B cell (primary cell): ENCODE measurements at regions of chr17 and their contacts with region 1.

Region 1: DNA sequence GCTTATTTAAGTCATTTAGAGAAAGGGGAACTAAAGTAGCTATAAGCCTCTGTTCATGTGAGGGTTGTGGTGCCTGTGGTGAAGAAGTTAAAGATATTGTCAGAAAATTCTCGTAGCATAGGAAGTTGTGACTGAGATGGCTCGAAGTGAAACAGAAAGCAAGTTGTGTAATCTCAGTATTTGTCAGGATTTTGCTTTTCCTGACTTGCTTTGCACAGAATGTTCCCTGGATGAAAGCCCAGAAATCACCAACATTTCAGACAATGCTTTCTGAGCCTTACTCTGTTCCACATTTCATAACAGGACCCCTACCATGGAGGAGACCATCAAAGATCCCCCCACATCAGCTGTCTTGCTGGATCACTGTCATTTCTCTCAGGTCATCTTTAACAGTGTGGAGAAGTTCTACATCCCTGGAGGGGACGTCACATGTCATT is 10.6 kb downstream of the CALCOCO2 start:
- DNase-seq: peak; percentile 83
- ATAC-seq: peak; percentile 91
- H3K4me3 ChIP-seq: peak overlapping the region; percentile 23 to 56 (median 46)
- H3K4me3 Mint-ChIP-seq: peak overlapping the region; percentile 90
- H3K27ac ChIP-seq: peak overlapping the region; percentile 76 to 91
- H3K27ac Mint-ChIP-seq: peak overlapping the region; percentile 96
- H3K4me1 ChIP-seq: peaks cover 47 to 48% of the 10 kb centered on the region in 2 donors
- H3K4me1 Mint-ChIP-seq: peaks cover 42% of the 10 kb centered on the region
- H3K27me3 ChIP-seq: no peaks in the 10 kb centered on the region
- H3K27me3 Mint-ChIP-seq: no peaks in the 10 kb centered on the region
- CTCF ChIP-seq: no peak

Region 2: DNA sequence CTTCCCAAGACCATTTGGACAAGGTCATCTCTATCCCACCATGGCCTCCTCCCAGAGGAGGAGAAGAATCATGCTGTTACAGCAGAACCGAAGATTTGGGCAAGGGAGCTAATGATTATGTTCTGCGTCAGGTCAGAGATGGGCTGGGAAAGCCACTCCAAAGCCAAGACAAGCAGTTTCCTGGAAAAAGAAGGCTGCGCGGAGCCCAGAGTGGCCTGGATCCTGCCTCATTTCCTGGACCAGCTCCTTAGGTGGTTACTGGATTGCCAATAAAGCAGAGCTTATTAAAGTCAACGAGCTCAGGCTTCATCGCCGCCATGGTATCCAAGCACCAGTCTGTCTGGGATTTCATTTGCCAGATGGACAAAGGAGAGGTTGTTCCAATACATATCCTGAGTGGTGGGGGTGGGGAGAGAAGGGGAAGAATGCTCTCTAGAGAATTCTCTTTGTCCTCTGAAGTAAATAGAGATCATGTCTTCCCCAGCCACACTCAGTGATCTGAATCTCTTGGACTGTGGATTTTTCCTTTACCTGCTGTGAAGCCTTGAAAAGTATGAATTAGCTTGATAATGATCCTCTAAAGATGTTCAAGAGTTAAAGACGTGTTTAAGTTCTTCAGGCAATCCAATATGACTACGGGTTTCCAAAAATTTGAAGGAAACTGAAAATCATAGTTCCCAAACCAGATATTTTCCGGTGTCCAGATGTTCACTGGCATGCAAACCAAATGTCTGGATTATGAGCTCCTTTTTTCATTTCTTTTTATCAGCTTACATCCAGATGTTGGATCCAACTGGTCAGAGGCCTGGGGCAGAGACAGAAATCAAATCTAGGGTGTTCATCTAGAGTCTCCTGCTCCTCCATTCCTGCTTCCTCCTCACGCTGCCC is 136.8 kb before region 1 on chr17:
- CTCF ChIA-PET with region 1: no interaction called
- POLR2A ChIA-PET with region 1: no interaction called
- intact Hi-C with region 1: no loop called
- DNase-seq: no peak
- ATAC-seq: no peak
- H3K4me3 ChIP-seq: no peak overlapping the region
- H3K4me3 Mint-ChIP-seq: no peak overlapping the region
- H3K27ac ChIP-seq: no peak overlapping the region
- H3K27ac Mint-ChIP-seq: no peak overlapping the region
- H3K4me1 ChIP-seq: no peaks in the 10 kb centered on the region
- H3K4me1 Mint-ChIP-seq: no peaks in the 10 kb centered on the region
- H3K27me3 ChIP-seq: peaks cover 0 to 44% (median 29%) of the 10 kb centered on the region in 4 experiments
- H3K27me3 Mint-ChIP-seq: peaks cover 70% of the 10 kb centered on the region
- CTCF ChIP-seq: no peak

Region 3: DNA sequence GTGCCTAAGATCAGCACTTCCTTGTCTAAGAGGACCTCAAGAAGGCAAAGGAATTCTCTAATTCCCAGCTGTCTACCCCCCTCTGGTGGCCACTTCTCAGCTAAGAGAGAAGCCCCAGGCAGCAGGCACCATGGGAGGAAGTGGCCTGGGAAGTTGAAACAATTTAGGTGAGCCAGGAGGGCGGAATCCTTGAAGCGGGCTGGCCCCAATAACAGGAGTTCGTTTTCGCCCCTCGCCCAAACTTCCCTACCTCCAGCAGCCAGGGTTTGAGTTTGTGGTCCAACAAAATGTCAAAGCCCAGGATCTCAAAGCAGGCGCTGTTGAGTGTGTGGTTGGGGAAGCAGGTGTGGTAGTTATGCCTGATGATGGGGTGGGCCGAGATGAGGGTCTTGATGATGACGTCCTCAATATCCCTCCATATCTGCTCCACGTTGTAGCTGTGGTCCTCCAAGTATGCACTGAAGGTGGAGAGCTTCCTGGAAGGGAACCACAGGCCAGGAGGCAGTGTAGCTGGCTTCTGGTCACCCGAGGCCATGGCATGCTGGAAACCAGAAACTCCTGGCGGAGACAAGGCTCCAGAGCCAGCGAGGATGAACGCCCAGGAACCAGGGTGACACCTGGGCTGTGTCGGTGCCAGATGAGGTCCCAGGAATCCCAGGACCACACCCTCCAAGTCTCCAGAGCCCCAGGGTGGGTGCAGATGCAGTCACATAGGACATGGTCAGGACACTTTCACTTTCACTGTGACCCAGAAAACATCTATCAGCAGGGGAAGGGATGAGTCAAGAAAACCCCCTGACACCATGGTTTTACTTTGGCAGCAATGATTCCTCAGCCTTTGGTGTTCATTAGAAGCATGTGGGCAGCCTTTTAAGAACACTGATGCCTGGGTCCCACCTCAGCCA is 50.0 kb before region 1 on chr17:
- CTCF ChIA-PET with region 1: no interaction called
- POLR2A ChIA-PET with region 1: no interaction called
- intact Hi-C with region 1: no loop called
- DNase-seq: peak; percentile 32
- ATAC-seq: no peak
- H3K4me3 ChIP-seq: no peak overlapping the region
- H3K4me3 Mint-ChIP-seq: no peak overlapping the region
- H3K27ac ChIP-seq: no peak overlapping the region
- H3K27ac Mint-ChIP-seq: no peak overlapping the region
- H3K4me1 ChIP-seq: peaks cover 0 to 10% of the 10 kb centered on the region in 2 donors
- H3K4me1 Mint-ChIP-seq: peaks cover 3% of the 10 kb centered on the region
- H3K27me3 ChIP-seq: peaks cover 0 to 20% (median 3%) of the 10 kb centered on the region in 4 experiments
- H3K27me3 Mint-ChIP-seq: peaks cover 47% of the 10 kb centered on the region
- CTCF ChIP-seq: peak; percentile 33

Region 4: GRCh38 chr17:48804925-48805411 is 36.4 kb before region 1 on chr17:
- CTCF ChIA-PET with region 1: interaction called, 10 read pairs
- POLR2A ChIA-PET with region 1: no interaction called
- intact Hi-C with region 1: no loop called
- DNase-seq: peak; percentile 72
- ATAC-seq: peak; percentile 93
- H3K4me3 ChIP-seq: no peak overlapping the region
- H3K4me3 Mint-ChIP-seq: no peak overlapping the region
- H3K27ac ChIP-seq: no peak overlapping the region
- H3K27ac Mint-ChIP-seq: no peak overlapping the region
- H3K4me1 ChIP-seq: peaks cover 2 to 3% of the 10 kb centered on the region in 2 donors
- H3K4me1 Mint-ChIP-seq: no peaks in the 10 kb centered on the region
- H3K27me3 ChIP-seq: peaks cover 0 to 9% (median 4%) of the 10 kb centered on the region in 4 experiments
- H3K27me3 Mint-ChIP-seq: peaks cover 14% of the 10 kb centered on the region
- CTCF ChIP-seq: peak; percentile 95

Region 5: DNA sequence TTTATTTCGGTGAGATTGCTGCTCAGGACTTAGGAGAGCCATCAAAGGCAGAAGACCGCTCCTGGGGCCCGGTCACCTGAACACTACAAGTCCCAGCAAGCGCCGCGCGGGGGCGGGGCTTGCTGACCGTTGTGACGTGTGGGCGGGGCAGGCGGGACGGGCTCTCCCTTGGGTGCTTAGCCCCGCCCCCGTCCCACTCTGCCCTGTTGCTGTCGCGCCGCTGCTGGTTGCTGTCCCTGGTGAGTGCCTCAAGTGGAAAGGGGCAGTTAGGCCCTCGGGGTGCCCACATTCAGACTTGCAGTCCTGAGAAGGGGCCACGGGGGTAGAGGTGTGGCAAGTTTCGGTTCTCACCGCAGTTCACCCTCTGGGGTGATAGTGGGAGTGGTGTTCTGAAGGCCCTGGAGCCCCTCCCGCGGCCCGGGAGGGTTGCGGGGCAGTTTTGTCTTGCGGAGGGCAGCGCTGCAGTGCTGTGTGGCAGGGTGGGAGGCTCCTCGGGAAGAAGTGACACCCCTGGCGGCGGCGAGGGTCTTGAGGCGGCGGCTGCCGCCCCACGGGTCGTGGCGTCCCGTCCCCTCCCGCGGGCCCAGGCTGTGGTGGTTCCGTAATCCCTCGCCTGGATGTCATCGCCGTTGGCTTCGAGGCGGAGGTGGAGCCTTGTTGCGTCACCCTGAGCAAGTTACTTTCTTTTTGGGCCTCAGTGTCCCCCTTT is 10.4 kb before region 1 on chr17 and contains the start of gene CALCOCO2:
- CTCF ChIA-PET with region 1: interaction called, 4 read pairs
- POLR2A ChIA-PET with region 1: no interaction called
- intact Hi-C with region 1: loop called (anchors 1 kb)
- DNase-seq: peak; percentile 95
- ATAC-seq: peak; percentile 94
- H3K4me3 ChIP-seq: peak within 1 kb of the TSS; percentile 85 to 99 (median 90)
- H3K4me3 Mint-ChIP-seq: peak within 1 kb of the TSS; percentile 100
- H3K27ac ChIP-seq: peak within 1 kb of the TSS; percentile 93 to 95
- H3K27ac Mint-ChIP-seq: peak within 1 kb of the TSS; percentile 98
- H3K4me1 ChIP-seq: peaks cover 23 to 33% of the 10 kb centered on the region in 2 donors
- H3K4me1 Mint-ChIP-seq: peaks cover 39% of the 10 kb centered on the region
- H3K27me3 ChIP-seq: no peaks in the 10 kb centered on the region
- H3K27me3 Mint-ChIP-seq: peaks cover 6% of the 10 kb centered on the region
- CTCF ChIP-seq: no peak
- total RNA-seq, gene CALCOCO2: 139 and 148 TPM in 2 replicates

Region 6: DNA sequence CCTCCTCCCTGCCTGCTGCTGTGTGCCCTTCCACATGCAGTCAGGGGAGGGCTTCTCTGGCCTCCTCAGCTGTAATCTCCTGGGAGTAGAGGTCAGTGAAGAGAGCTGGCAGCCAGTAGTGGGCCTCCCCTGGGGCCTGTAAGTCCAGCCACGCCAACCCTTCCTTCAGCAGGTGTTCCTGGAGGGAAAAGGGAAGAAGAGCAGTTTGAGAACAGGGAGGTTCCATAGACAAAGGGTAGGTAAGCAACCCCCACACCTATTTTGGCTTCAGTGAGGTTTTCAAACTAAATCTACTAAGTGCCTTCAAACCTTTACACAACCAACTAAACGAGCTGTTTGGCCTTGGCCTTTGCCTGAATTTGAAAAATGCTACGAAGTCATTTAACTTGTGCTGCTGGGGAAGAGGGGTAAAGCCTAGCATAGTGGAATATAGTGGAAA is 89.0 kb after region 1 on chr17:
- CTCF ChIA-PET with region 1: no interaction called
- POLR2A ChIA-PET with region 1: no interaction called
- intact Hi-C with region 1: no loop called
- DNase-seq: no peak
- ATAC-seq: no peak
- H3K4me3 ChIP-seq: no peak overlapping the region
- H3K4me3 Mint-ChIP-seq: no peak overlapping the region
- H3K27ac ChIP-seq: no peak overlapping the region
- H3K27ac Mint-ChIP-seq: no peak overlapping the region
- H3K4me1 ChIP-seq: no peaks in the 10 kb centered on the region
- H3K4me1 Mint-ChIP-seq: peaks cover 4% of the 10 kb centered on the region
- H3K27me3 ChIP-seq: no peaks in the 10 kb centered on the region
- H3K27me3 Mint-ChIP-seq: no peaks in the 10 kb centered on the region
- CTCF ChIP-seq: no peak

Region 7: DNA sequence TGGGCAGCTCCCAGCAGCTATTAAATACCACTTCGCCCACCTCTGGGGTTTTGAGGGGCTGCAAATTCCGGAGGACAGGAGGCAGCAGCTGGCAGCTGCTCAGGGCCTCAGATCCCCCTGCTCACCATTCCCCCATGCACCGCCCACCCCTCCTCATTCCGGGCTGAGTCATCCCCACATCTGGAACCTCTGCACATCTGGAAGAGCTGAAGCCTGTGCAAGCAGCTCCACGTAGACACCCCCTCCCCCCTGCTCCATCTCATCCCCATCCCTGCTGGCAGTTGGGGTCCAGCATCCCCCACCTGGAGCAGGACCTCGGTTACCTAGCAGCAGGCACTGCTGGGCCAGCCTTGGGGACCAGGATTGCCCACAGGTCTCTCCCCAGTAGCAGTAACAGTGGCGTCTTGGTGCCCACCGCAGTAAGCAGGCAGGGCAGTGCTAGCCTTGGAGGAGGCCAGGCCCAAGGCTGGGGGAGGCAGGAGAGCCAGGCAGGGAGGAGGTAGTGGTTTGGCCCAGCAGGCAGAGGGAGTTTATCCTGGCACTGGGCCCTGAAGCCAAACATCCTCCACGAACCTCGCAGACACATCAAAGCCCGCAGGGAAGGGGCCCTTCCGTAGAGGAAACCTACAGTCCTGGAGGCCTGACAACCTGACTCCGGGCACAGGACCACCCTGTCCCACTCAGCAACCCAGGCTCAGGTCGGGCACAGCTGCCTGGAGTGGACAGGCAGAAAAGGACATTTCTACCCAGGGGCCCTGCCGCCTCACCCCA is 1425.1 kb after region 1 on chr17:
- CTCF ChIA-PET with region 1: no interaction called
- POLR2A ChIA-PET with region 1: no interaction called
- intact Hi-C with region 1: no loop called
- DNase-seq: no peak
- ATAC-seq: no peak
- H3K4me3 ChIP-seq: no peak overlapping the region
- H3K4me3 Mint-ChIP-seq: no peak overlapping the region
- H3K27ac ChIP-seq: no peak overlapping the region
- H3K27ac Mint-ChIP-seq: no peak overlapping the region
- H3K4me1 ChIP-seq: no peaks in the 10 kb centered on the region
- H3K4me1 Mint-ChIP-seq: no peaks in the 10 kb centered on the region
- H3K27me3 ChIP-seq: peaks cover 0 to 3% (median 0%) of the 10 kb centered on the region in 4 experiments
- H3K27me3 Mint-ChIP-seq: peaks cover 22% of the 10 kb centered on the region
- CTCF ChIP-seq: no peak